ENCODE measurements at regions of chr3 and their contacts with region 1.

Region 1: GRCh38 chr3:187986514-187986934 is 167.4 kb upstream of the LPP start:
- DNase-seq: peak; percentile 34
- H3K4me3 Mint-ChIP-seq: peak overlapping the region; percentile 21
- H3K27ac Mint-ChIP-seq: peak overlapping the region; percentile 82
- H3K4me1 Mint-ChIP-seq: peaks cover 70% of the 10 kb centered on the region
- H3K27me3 Mint-ChIP-seq: no peaks in the 10 kb centered on the region

Region 2: DNA sequence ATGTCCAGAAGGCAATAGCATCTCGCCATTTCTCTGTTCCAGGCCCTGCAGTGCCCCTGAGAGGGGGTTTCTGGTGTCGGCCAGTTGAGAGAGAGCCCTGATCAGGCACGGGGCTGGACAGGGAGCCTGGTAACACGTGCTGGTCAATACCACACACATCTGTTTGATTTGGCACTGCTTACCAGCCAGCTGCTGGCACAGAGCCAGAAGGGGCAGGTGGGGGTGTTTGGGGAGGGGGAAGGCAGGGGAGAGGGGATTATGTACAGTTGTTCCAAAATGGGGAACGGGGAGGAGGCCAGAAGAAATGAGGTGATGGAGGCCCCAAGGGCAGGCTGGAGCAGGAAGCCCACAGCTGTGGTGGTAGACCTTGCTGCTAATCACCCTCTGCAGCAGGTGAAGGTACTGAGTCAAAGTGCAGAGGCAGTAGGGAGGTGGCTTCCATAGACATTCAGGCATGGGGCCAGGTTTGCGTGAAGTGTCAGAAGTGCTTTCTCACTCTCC is 13.9 kb after region 1 on chr3:
- intact Hi-C with region 1: loop called (anchors 1 kb)
- DNase-seq: no peak
- H3K4me3 Mint-ChIP-seq: peak overlapping the region; percentile 71
- H3K27ac Mint-ChIP-seq: peak overlapping the region; percentile 93
- H3K4me1 Mint-ChIP-seq: peaks cover 84% of the 10 kb centered on the region
- H3K27me3 Mint-ChIP-seq: no peaks in the 10 kb centered on the region

Measured in activated T-helper 1 cell treated with anti-CD3 and anti-CD28 coated beads, Interleukin-12 subunit alpha, Interleukin-12 subunit beta, Interleukin-2, Interleukin-4 antibody, amounts not matched to agents 30 ng/mL and 10 ng/mL and 1 ng/mL, durations not matched to agents 14 hours and 24 hours and 36 hours (primary cell).